Body of pancreas (tissue), 4 donors: ENCODE measurements at regions of chr1 and their contacts with region 1.

Region 1: GRCh38 chr1:104780470-104781078 is 1030.9 kb downstream of the AMY1C start:
- DNase-seq: no peak
- ATAC-seq: no peak
- H3K4me3 ChIP-seq: no peak overlapping the region
- H3K27ac ChIP-seq: no peak overlapping the region
- H3K4me1 ChIP-seq: no peaks in the 10 kb centered on the region
- H3K27me3 ChIP-seq: no peaks in the 10 kb centered on the region
- CTCF ChIP-seq: peak; percentile 68 to 84 (median 74)
- POLR2A ChIP-seq: no peak

Region 2: DNA sequence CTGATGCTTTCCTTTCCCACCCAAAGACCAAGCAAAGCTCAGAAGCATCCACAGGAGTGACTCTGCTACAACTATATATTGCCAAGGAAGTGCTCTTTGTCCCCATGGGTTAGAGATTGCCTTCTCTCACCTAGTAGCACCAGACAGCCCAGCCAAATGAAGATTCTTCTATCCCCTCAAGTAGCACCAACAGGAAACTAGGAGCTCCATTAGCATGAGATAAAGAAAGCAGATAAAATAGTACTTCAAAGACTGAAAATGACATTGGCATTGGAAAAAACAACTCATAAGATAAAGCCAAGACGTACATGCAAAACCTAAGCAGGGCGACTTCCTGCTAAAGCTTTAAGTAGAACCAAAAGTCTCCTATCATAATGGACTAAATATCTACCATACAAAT is 159.4 kb before region 1 on chr1:
- intact Hi-C with region 1: no loop called
- DNase-seq: no peak
- ATAC-seq: no peak
- H3K4me3 ChIP-seq: no peak overlapping the region
- H3K27ac ChIP-seq: no peak overlapping the region
- H3K4me1 ChIP-seq: no peaks in the 10 kb centered on the region
- H3K27me3 ChIP-seq: no peaks in the 10 kb centered on the region
- CTCF ChIP-seq: no peak
- POLR2A ChIP-seq: no peak

Region 3: GRCh38 chr1:104884939-104885338 is 104.4 kb after region 1 on chr1:
- intact Hi-C with region 1: no loop called
- DNase-seq: no peak
- ATAC-seq: no peak
- H3K4me3 ChIP-seq: no peak overlapping the region
- H3K27ac ChIP-seq: no peak overlapping the region
- H3K4me1 ChIP-seq: no peaks in the 10 kb centered on the region
- H3K27me3 ChIP-seq: no peaks in the 10 kb centered on the region
- CTCF ChIP-seq: no peak
- POLR2A ChIP-seq: no peak

Region 4: GRCh38 chr1:105793536-105794146 is 1013.1 kb after region 1 on chr1:
- intact Hi-C with region 1: loop called (anchors 10 kb)
- DNase-seq: peak; percentile 33 to 64 (median 48)
- ATAC-seq: no peak
- H3K4me3 ChIP-seq: no peak overlapping the region
- H3K27ac ChIP-seq: no peak overlapping the region
- H3K4me1 ChIP-seq: no peaks in the 10 kb centered on the region
- H3K27me3 ChIP-seq: no peaks in the 10 kb centered on the region
- CTCF ChIP-seq: peak in 6 of 7 experiments; percentile 51 to 64 (median 59)
- POLR2A ChIP-seq: no peak